Right ventricle myocardium inferior (tissue), 1 donor: ENCODE measurements at regions of chr17 and their contacts with region 1.

Region 1: DNA sequence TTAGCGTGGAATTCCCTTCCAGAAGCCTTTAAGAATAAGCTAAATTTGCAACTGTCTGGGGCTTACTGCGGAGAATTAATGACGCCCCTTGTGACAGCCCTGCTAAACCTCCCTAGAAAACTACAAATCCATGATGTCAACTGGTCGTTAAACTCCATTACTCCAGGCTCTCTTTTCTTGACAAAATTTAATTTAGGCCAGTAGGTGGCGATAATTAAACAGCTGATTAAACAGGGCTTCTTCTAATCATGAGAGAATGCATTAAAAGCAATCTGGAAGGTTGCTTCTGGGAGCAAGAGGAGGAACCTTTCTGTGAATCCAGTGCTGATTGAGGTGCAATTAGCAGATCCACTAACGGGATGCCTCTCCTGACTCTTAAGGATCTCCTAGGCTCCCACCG is 8.1 kb upstream of the NLRP1 start:
- DNase-seq: no peak
- ATAC-seq: no peak

Region 2: GRCh38 chr17:5344914-5345313 is 247.5 kb before region 1 on chr17:
- intact Hi-C with region 1: no loop called
- DNase-seq: no peak
- ATAC-seq: no peak

Region 3: DNA sequence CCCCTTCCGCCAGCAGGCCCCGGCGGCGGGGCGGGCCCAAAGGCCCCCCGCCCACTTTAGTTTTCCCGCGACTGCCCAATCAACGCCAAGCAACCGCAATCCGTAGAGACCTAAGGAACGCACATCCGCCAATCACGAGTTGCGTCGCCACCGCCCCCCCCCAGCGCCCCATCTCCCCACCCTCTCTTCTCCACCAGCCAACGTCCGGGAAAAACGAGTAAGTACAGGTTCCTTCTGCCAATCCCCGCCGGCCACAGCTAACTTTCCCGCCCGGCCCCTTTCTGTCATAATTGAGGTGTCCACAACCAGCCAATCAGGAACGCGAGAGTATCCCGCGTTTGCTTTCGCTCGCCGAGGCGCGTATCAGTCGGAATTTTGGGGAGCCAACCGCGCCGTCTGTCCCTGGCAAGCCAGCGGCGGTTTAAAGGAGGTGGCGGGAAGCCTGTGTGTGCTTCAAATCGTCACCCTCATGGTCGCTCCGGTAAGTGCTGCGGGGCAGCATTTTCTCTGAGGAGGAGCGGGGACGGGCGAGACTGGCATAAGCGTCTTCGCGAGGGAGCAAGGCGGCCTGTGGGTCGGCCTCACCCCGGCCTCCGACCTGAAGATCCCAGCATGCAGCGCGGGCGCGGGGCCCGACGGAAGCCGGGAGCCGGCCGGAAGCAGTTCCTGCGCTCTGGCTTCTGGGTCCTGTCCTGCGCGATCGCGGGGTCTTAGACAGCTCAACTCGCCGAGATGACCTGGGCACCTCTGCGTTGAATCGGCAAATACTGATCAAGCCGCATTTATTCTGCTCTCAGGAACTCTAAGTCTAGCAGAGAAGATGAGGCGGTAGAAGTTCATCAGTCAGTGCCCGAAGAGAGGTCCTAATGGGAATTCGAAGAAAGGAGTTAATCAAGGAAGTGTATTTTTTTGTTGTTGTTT is 105.9 kb before region 1 on chr17 and contains the start of gene MIS12:
- intact Hi-C with region 1: no loop called
- DNase-seq: peak; percentile 99
- ATAC-seq: peak; percentile 96
- total RNA-seq, gene MIS12: 11.4 TPM

Region 4: DNA sequence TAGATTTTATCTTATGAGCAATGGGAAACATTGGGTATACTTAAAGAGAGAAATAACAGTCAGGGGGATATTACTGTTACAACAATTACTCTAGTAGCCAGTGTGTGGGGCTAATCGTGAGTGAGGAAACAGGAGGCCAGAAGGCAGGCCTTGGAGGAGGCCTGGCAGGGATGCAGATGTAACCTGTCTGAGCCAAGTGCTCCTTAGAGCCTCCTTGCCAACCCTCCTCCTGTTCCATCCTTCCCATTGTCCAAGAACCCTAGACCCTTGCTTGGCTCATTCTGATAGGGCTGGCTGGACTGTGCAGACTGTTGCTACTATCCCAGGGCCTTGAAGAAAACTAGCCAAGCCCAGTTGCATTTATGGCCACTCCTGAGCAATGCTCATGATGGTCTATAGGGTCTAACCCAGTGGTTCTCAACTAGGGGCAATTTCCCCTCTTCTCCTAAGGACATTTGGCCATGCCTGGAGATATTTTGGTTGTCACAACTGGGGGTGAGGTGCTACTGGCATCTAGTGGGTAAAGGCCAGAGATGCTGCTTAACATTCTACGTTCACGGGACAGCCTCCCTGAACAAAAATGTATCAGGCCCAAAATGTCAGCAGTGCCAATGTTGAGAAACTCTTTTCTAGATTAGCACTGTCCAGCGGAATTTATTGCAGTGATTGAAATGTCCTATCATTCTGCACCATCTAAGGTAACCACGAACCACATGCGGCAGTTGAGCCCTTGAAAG is 453.4 kb after region 1 on chr17:
- intact Hi-C with region 1: loop called (anchors 10 kb)
- DNase-seq: no peak
- ATAC-seq: no peak